GM10248 (cell line): ENCODE measurements at regions of chr17 and their contacts with region 1.

Region 1: GRCh38 chr17:43907425-43907981 is at the start of gene MPP2:
- DNase-seq: peak; percentile 48
- CTCF ChIP-seq: no peak

Region 2: GRCh38 chr17:43891851-43892646 is 15.5 kb before region 1 on chr17:
- CTCF ChIA-PET with region 1: interaction called, 17 read pairs
- POLR2A ChIA-PET with region 1: no interaction called
- DNase-seq: no peak
- CTCF ChIP-seq: no peak

Region 3: DNA sequence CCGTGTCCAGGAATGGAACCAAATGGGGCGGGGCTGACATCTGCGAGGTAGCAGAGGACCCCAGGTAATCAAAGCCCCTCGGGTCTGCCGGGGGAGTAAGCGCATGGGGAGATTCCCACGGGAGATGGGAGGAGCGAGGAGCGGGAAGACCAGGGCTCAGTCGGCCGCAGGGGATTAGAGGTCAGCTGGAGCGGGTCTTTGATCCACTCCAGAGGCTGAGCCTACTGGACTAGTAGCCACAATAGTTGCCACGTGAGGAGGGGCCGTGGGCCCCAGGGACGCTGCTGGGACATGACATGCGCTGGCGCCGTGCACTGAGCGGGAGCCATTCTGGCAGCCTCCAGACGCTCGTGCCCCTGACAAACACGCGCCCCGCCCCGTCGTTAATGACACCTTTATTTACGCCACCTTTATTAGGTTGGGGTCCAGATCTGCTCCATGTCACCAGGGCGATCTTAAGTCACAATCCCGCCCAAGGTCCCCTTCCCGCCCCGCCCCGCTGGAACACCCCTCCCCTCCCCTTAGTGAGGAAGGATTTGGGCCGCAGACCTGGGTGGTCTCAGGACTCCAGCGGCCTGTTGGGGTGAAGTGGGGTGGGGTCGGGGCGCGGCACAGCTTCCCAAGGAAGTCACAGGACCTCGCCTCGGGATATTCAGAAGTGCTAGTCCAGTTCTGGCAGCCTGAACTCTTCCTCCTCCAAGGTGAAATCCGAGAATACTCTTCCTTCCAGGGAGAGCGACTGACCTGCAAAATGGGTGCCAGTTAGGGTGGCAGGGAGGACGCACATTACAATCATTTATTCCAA is 19.8 kb after region 1 on chr17:
- CTCF ChIA-PET with region 1: interaction called, 50 read pairs
- POLR2A ChIA-PET with region 1: no interaction called
- DNase-seq: no peak
- CTCF ChIP-seq: no peak

Region 4: GRCh38 chr17:43946069-43946696 is 38.7 kb after region 1 on chr17:
- CTCF ChIA-PET with region 1: interaction called, 25 read pairs
- POLR2A ChIA-PET with region 1: no interaction called
- DNase-seq: no peak
- CTCF ChIP-seq: no peak

Region 5: GRCh38 chr17:43994272-43995149 is 87.0 kb after region 1 on chr17:
- CTCF ChIA-PET with region 1: interaction called, 17 read pairs
- POLR2A ChIA-PET with region 1: interaction called, 6 read pairs
- DNase-seq: peak; percentile 76
- CTCF ChIP-seq: peak; percentile 82